Common myeloid progenitor, CD34-positive (primary cell): ENCODE measurements at regions of chr21 and their contacts with region 1.

Region 1: DNA sequence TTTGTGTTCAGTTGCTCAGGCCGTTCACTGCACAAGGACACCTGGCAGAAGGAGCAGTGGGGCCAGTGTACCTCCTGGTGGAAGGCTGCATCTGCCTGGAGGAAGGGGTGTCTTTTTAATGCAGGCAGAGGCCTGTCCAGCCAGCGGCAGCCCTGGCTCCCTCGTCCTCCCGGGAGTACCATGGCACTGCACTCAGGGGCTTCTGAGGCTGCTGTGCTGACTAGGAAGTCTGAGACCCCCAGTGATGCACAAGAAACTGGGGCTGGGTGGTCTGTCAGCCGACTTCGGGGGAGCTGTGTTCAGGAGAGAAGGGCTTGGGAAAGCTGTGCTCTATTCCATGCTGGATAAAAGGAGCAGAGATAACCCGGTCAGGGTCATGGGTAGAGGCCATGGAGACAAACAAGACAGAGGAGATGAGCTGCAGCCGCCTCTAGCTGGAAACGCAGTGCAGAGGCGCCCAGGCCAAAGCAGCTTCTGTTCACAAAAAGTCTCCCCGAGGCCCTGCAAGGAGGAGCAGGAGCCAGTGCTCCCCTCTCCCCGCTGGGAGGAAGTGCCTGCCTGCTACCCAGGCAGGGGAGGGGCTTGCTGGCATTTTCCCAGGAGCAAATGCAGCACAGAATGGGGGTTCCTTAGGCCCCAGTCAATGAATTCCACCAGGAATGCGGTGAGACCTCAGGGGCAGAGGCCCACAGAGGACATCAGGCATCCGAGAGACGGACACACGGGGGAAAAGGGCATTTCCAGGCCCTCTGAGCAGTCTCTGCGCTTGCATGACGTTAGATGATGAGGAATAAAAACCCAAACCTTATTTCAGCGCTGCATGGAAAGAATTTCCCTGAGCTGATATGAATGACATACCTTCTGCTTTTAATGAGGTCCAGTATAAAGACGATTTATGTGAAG is 17.2 kb upstream of the C2CD2 start:
- DNase-seq: no peak
- H3K4me3 ChIP-seq: no peak overlapping the region
- H3K27ac ChIP-seq: no peak overlapping the region
- H3K4me1 ChIP-seq: peaks cover 0 to 21% (median 13%) of the 10 kb centered on the region in 4 experiments
- H3K27me3 ChIP-seq: no peaks in the 10 kb centered on the region

Region 2: GRCh38 chr21:41957991-41958766 is 12.8 kb before region 1 on chr21:
- CTCF ChIA-PET with region 1: interaction called, 11 read pairs
- POLR2A ChIA-PET with region 1: no interaction called
- DNase-seq: peak in 1 of 3 donors; percentile 18
- H3K4me3 ChIP-seq: no peak overlapping the region
- H3K27ac ChIP-seq: no peak overlapping the region
- H3K4me1 ChIP-seq: peaks cover 0 to 52% (median 37%) of the 10 kb centered on the region in 4 experiments
- H3K27me3 ChIP-seq: no peaks in the 10 kb centered on the region